PC-9 (cell line): ENCODE measurements at regions of chr3 and their contacts with region 1.

Region 1: GRCh38 chr3:168383573-168383972 is 287.8 kb upstream of the GOLIM4 start:
- DNase-seq: no peak
- H3K4me3 ChIP-seq: no peak overlapping the region
- H3K27ac ChIP-seq: no peak overlapping the region
- H3K4me1 ChIP-seq: no peaks in the 10 kb centered on the region
- H3K27me3 ChIP-seq: no peaks in the 10 kb centered on the region
- CTCF ChIP-seq: no peak

Region 2: GRCh38 chr3:168341192-168341815 is 42.3 kb before region 1 on chr3:
- CTCF ChIA-PET with region 1: no interaction called
- POLR2A ChIA-PET with region 1: interaction called, 13 read pairs
- intact Hi-C with region 1: no loop called
- DNase-seq: peak in 1 of 2 experiments; percentile 53
- H3K4me3 ChIP-seq: no peak overlapping the region
- H3K27ac ChIP-seq: no peak overlapping the region
- H3K4me1 ChIP-seq: peaks cover 25% of the 10 kb centered on the region
- H3K27me3 ChIP-seq: no peaks in the 10 kb centered on the region
- CTCF ChIP-seq: no peak

Region 3: GRCh38 chr3:168696051-168696450 is 312.5 kb after region 1 on chr3:
- CTCF ChIA-PET with region 1: no interaction called
- POLR2A ChIA-PET with region 1: no interaction called
- intact Hi-C with region 1: no loop called
- DNase-seq: no peak
- H3K4me3 ChIP-seq: no peak overlapping the region
- H3K27ac ChIP-seq: no peak overlapping the region
- H3K4me1 ChIP-seq: no peaks in the 10 kb centered on the region
- H3K27me3 ChIP-seq: no peaks in the 10 kb centered on the region
- CTCF ChIP-seq: no peak